ENCODE measurements at regions of chr17 and their contacts with region 1.

Region 1: DNA sequence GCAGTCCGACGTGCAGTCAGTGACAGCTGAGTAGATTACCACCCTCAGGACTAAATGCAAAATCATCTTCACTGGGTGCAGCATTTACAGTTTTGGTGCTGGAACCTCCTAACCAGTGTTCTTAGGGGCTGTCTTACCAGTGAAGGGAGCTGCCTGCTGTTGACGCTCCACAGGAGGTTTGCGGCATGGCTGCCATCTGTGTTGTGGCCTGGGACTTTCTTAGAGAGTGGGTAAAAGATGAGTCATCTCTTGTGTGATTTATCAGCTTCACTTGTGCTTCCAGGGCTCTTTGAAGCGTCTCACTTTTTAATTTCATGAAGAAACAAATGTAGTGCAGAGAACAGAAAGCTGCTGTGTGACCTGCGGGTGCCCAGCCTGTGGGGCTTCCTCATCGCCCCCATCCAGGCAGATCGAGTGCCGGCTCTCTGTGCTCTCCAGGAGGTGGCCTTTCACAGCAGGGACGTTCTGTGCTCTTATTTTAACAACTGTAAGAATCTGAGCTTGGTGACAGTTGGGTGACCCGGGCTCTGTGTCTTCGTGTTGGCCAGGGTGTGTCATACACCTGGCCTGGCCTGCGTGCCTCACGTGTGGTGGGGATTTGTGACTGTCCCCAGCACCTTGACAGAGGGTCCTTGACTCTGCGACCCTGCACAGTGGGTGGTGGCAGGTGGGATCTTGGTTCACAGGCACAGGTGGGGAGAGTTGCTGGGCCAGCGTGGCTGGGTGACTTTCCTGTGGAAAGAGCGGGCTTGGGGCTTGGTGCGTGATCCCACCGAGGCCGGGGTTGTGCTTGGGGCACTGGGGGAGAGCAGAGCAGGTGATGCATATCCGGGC is 24.3 kb upstream of the ZNF750 start:
- DNase-seq: peak; percentile 78 to 96 (median 93)
- H3K4me3 ChIP-seq: peak overlapping the region; percentile 55
- H3K4me3 Mint-ChIP-seq: peak overlapping the region; percentile 62 to 90 (median 83)
- H3K27ac ChIP-seq: peak overlapping the region; percentile 73
- H3K27ac Mint-ChIP-seq: peak overlapping the region; percentile 93 to 99 (median 98)
- H3K4me1 ChIP-seq: peaks cover 83% of the 10 kb centered on the region
- H3K4me1 Mint-ChIP-seq: peaks cover 65 to 85% (median 74%) of the 10 kb centered on the region in 3 donors
- H3K27me3 ChIP-seq: no peaks in the 10 kb centered on the region
- H3K27me3 Mint-ChIP-seq: no peaks in the 10 kb centered on the region

Region 2: GRCh38 chr17:82882715-82883418 is 18.7 kb after region 1 on chr17:
- CTCF ChIA-PET with region 1: interaction called, 15 read pairs
- POLR2A ChIA-PET with region 1: interaction called, 24 read pairs
- DNase-seq: peak; percentile 81 to 94 (median 86)
- H3K4me3 ChIP-seq: peak overlapping the region; percentile 59
- H3K4me3 Mint-ChIP-seq: peak overlapping the region; percentile 69 to 88 (median 86)
- H3K27ac ChIP-seq: peak overlapping the region; percentile 74
- H3K27ac Mint-ChIP-seq: peak overlapping the region; percentile 97 to 100 (median 100)
- H3K4me1 ChIP-seq: peaks cover 55% of the 10 kb centered on the region
- H3K4me1 Mint-ChIP-seq: peaks cover 83 to 97% (median 95%) of the 10 kb centered on the region in 3 donors
- H3K27me3 ChIP-seq: no peaks in the 10 kb centered on the region
- H3K27me3 Mint-ChIP-seq: peaks cover 0 to 2% of the 10 kb centered on the region in 2 donors